ENCODE measurements at regions of chr7 and their contacts with region 1.

Region 1: DNA sequence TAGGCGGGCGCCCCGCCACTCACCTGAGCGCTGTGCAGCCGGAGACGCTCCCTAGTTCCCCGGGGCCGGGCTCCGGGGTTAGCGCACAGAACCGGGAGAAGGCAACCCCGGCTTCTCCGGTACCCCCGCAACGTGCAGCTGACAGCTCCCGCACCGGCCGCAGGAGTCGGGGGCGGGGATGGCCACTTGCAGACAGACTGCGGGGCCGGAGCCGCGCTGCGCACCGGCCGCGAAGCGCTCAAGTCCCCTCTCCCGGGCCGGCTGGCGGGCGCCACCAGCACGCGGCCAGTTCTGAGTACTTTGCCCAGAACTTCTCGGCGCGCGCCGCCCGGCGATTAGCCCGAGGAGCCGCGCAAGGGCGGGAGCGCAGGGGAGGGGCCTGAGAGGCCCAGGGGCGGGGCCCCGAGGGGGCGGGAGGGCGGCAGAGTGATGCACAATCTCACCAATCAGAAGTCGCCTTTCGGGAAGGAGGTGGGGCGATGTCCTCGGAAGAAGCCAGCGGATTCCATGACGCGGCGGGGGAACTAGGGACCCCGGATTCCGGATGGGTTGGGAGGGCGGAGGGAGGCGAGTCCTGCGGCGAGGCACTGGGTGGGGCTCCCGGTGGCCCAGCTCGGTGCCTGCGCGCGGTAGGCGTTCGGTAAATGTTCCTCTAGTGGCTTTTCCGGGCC is at the start of gene OSBPL3:
- DNase-seq: peak; percentile 93 to 97 (median 97)
- H3K4me3 ChIP-seq: peak within 1 kb of the TSS; percentile 78 to 93 (median 84)
- H3K27ac ChIP-seq: peak within 1 kb of the TSS in 1 of 2 experiments; percentile 79
- H3K4me1 ChIP-seq: peaks cover 0 to 37% (median 28%) of the 10 kb centered on the region in 4 experiments
- H3K27me3 ChIP-seq: peaks cover 0 to 4% (median 0%) of the 10 kb centered on the region in 5 experiments

Region 2: GRCh38 chr7:24896031-24896501 is 83.9 kb before region 1 on chr7:
- CTCF ChIA-PET with region 1: interaction called, 10 read pairs
- POLR2A ChIA-PET with region 1: interaction called, 3 read pairs
- DNase-seq: peak in 2 of 3 donors; percentile 60 to 68
- H3K4me3 ChIP-seq: peak overlapping the region in 1 of 7 experiments; percentile 12
- H3K27ac ChIP-seq: no peak overlapping the region
- H3K4me1 ChIP-seq: peaks cover 0 to 66% (median 39%) of the 10 kb centered on the region in 4 experiments
- H3K27me3 ChIP-seq: no peaks in the 10 kb centered on the region

Region 3: DNA sequence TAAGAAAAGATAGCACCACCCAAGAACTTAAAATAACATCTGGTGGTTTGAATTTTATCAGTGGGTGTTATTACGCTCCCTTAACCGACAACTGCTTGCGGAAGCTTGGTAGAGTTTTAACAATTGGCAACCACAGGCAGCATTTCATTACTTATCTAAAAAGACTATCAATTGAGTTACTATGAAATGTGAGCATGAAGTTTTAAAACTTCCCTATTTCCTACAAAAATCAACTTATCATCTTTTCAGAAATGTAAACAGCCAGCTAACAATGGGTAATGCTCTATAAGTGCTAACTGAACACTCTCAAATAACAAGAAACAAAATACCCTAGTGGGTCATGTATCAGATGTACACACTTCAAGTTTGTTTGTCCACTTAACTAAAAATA is 68.8 kb before region 1 on chr7:
- CTCF ChIA-PET with region 1: interaction called, 20 read pairs
- POLR2A ChIA-PET with region 1: interaction called, 3 read pairs
- DNase-seq: peak; percentile 71 to 95 (median 93)
- H3K4me3 ChIP-seq: peak overlapping the region in 4 of 7 experiments; percentile 12 to 48 (median 42)
- H3K27ac ChIP-seq: peak overlapping the region; percentile 40 to 48
- H3K4me1 ChIP-seq: peaks cover 38 to 86% (median 76%) of the 10 kb centered on the region in 4 experiments
- H3K27me3 ChIP-seq: no peaks in the 10 kb centered on the region

Region 4: DNA sequence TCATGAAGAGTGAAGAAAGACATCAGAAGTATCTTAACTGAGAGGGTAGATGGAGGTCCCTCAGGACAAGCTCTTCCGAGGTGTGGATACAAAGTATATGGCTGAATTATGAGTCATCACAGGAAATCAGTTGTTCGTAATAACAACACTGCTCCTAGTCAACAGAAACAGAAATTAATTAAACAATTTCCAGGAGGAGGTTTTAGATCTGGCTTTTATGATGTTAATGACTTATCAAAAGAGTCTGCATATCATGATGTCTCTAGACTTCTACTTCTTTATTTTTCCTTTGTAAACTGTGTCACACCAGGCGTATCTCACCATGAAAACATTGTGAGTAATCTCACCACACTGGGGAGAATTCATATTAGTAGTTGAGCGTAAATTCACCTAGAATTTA is 31.3 kb before region 1 on chr7:
- CTCF ChIA-PET with region 1: interaction called, 13 read pairs
- POLR2A ChIA-PET with region 1: interaction called, 5 read pairs
- DNase-seq: no peak
- H3K4me3 ChIP-seq: no peak overlapping the region
- H3K27ac ChIP-seq: no peak overlapping the region
- H3K4me1 ChIP-seq: peaks cover 0 to 11% (median 5%) of the 10 kb centered on the region in 4 experiments
- H3K27me3 ChIP-seq: no peaks in the 10 kb centered on the region

Region 5: GRCh38 chr7:24965831-24966709 is 13.9 kb before region 1 on chr7:
- CTCF ChIA-PET with region 1: interaction called, 43 read pairs
- POLR2A ChIA-PET with region 1: interaction called, 3 read pairs
- DNase-seq: peak; percentile 66 to 96 (median 94)
- H3K4me3 ChIP-seq: peak overlapping the region in 1 of 7 experiments; percentile 46
- H3K27ac ChIP-seq: no peak overlapping the region
- H3K4me1 ChIP-seq: peaks cover 11 to 46% (median 32%) of the 10 kb centered on the region in 4 experiments
- H3K27me3 ChIP-seq: no peaks in the 10 kb centered on the region

Region 6: GRCh38 chr7:25259587-25260243 is 279.7 kb after region 1 on chr7:
- CTCF ChIA-PET with region 1: no interaction called
- POLR2A ChIA-PET with region 1: no interaction called
- DNase-seq: peak; percentile 79 to 85 (median 82)
- H3K4me3 ChIP-seq: no peak overlapping the region
- H3K27ac ChIP-seq: no peak overlapping the region
- H3K4me1 ChIP-seq: peaks cover 6 to 10% (median 10%) of the 10 kb centered on the region in 4 experiments
- H3K27me3 ChIP-seq: peaks cover 0 to 15% (median 6%) of the 10 kb centered on the region in 5 experiments

Measured in common myeloid progenitor, CD34-positive (primary cell).